Activated T-helper 1 cell treated with anti-CD3 and anti-CD28 coated beads, Interleukin-12 subunit alpha, Interleukin-12 subunit beta, Interleukin-2, Interleukin-4 antibody, amounts not matched to agents 30 ng/mL and 10 ng/mL and 1 ng/mL, durations not matched to agents 14 hours and 24 hours and 36 hours (primary cell): ENCODE measurements at regions of chr18 and their contacts with region 1.

Region 1: DNA sequence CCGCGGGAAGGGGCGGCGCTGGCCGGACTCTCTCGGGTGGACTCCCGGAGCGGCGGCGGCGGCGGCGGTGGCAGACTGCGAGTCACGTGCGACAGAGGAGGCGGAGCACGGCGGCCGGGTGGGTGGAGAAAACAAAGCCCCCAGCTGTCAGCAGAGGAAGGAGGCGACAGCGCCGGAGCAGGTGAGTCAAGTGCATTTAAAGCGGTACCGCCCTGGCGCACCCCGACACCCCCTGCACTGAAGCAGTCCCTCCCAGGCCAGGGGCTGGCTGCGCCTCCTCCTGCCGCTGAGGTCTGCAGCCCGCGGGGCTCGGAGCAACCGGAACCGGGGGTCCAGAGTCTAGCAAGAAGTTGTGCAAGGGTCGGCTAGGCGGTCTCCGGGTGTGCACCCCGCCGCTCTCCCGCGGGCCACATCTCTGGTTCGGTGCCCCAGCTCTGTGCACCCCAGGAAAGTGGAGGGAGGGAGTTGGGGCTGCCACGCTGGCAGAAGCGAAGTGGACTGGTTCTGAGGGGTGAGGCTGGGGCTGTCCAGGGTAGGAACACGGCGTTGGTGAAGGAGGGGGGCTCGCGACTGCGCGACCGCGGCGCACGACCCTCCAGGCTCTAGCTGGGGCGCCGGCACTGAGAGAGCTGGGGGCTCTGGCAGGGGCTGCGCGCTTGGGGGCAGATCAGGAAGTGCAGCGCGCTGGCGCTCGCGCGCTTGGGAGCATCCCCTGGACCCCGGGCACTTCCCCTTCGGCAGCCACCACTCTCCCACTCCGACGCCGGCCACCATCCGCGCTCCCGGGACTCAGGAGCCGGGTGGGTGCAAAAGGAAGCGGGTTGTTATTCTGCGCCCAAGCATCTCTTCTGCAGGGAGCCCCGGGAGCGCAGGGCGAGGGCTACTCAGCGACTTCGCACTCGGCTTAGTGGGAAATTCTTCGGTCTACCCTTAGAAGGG is 64.0 kb upstream of the MAPRE2 start:
- DNase-seq: peak; percentile 55
- H3K4me3 Mint-ChIP-seq: peak overlapping the region; percentile 78
- H3K27ac Mint-ChIP-seq: no peak overlapping the region
- H3K4me1 Mint-ChIP-seq: peaks cover 25% of the 10 kb centered on the region
- H3K27me3 Mint-ChIP-seq: peaks cover 31% of the 10 kb centered on the region

Region 2: DNA sequence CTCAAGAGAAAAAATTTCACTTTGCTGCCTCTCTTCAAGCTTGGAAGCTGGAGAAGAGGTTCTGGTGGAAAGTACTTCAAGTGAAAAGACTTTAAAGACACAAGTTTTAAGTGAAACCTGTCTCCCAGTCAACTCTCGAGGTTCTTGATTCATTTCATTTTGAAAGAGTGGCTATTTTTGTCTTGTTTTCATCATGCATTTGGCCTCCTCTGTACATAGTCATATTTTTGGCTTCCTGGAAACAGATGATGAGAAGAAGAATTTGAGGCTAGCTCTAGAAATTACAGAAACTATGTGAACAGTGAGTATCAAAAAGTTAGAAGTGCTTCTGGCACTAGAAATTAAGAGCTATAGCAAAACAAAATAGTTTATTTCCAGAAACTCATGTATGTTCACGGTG is 142.3 kb before region 1 on chr18:
- intact Hi-C with region 1: loop called (anchors 1 kb)
- DNase-seq: no peak
- H3K4me3 Mint-ChIP-seq: no peak overlapping the region
- H3K27ac Mint-ChIP-seq: peak overlapping the region; percentile 4
- H3K4me1 Mint-ChIP-seq: peaks cover 14% of the 10 kb centered on the region
- H3K27me3 Mint-ChIP-seq: no peaks in the 10 kb centered on the region

Region 3: DNA sequence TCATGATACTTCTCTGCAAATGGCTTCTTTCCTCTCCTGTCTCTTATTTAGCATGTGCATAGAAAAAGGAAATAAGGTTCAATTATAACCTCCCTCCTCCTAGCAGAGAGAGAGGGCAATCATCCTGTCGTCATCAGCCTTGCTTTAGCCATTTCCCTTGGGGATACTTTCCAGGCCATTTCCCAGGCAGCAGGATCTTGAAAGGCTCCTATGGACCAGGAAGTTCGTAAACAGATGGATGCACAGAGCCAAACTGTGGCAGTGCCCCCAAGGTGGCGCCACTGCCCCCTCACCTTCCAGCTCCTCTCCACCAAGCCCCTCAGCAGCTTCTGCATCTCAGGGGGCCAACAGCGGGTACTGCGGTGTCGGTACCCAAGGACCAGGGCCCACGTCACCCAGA is 109.6 kb before region 1 on chr18:
- intact Hi-C with region 1: loop called (anchors 1 kb)
- DNase-seq: no peak
- H3K4me3 Mint-ChIP-seq: no peak overlapping the region
- H3K27ac Mint-ChIP-seq: no peak overlapping the region
- H3K4me1 Mint-ChIP-seq: peaks cover 33% of the 10 kb centered on the region
- H3K27me3 Mint-ChIP-seq: peaks cover 20% of the 10 kb centered on the region

Region 4: DNA sequence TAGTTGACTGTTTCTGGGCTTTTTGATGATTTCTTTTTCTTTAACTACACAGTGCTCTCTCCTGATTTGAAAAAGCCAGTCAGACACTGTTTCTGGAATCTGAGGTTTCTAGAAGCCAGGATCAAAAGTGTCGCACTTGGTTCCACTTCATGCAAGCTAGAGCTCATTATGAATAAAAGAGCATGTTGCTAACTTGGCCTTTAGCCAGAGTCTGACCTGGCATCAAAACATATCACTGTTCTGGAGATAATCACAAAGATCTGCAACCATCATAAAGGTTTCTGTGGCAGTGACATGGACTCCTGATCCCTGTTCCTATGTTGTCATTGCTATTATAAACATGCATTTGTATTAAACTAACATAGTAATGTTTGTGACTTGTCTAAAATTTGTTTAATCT is 12.1 kb before region 1 on chr18:
- intact Hi-C with region 1: no loop called
- DNase-seq: no peak
- H3K4me3 Mint-ChIP-seq: no peak overlapping the region
- H3K27ac Mint-ChIP-seq: no peak overlapping the region
- H3K4me1 Mint-ChIP-seq: no peaks in the 10 kb centered on the region
- H3K27me3 Mint-ChIP-seq: peaks cover 1% of the 10 kb centered on the region

Region 5: GRCh38 chr18:35029770-35030169 is 52.6 kb after region 1 on chr18:
- intact Hi-C with region 1: loop called (anchors 5 kb)
- DNase-seq: no peak
- H3K4me3 Mint-ChIP-seq: peak overlapping the region; percentile 77
- H3K27ac Mint-ChIP-seq: peak overlapping the region; percentile 95
- H3K4me1 Mint-ChIP-seq: peaks cover 42% of the 10 kb centered on the region
- H3K27me3 Mint-ChIP-seq: no peaks in the 10 kb centered on the region

Region 6: GRCh38 chr18:35050028-35050546 is 72.9 kb after region 1 on chr18:
- intact Hi-C with region 1: loop called (anchors 2 kb)
- DNase-seq: no peak
- H3K4me3 Mint-ChIP-seq: peak overlapping the region; percentile 65
- H3K27ac Mint-ChIP-seq: peak overlapping the region; percentile 81
- H3K4me1 Mint-ChIP-seq: peaks cover 69% of the 10 kb centered on the region
- H3K27me3 Mint-ChIP-seq: no peaks in the 10 kb centered on the region

Region 7: GRCh38 chr18:35343936-35344735 is 367.0 kb after region 1 on chr18 and contains the start of gene ZNF24:
- intact Hi-C with region 1: loop called (anchors 2 kb)
- DNase-seq: peak; percentile 90
- H3K4me3 Mint-ChIP-seq: peak within 1 kb of the TSS; percentile 99
- H3K27ac Mint-ChIP-seq: peak within 1 kb of the TSS; percentile 98
- H3K4me1 Mint-ChIP-seq: peaks cover 38% of the 10 kb centered on the region
- H3K27me3 Mint-ChIP-seq: no peaks in the 10 kb centered on the region
- total RNA-seq, gene ZNF24: 56.4 and 56.6 TPM in 2 replicates

Region 8: DNA sequence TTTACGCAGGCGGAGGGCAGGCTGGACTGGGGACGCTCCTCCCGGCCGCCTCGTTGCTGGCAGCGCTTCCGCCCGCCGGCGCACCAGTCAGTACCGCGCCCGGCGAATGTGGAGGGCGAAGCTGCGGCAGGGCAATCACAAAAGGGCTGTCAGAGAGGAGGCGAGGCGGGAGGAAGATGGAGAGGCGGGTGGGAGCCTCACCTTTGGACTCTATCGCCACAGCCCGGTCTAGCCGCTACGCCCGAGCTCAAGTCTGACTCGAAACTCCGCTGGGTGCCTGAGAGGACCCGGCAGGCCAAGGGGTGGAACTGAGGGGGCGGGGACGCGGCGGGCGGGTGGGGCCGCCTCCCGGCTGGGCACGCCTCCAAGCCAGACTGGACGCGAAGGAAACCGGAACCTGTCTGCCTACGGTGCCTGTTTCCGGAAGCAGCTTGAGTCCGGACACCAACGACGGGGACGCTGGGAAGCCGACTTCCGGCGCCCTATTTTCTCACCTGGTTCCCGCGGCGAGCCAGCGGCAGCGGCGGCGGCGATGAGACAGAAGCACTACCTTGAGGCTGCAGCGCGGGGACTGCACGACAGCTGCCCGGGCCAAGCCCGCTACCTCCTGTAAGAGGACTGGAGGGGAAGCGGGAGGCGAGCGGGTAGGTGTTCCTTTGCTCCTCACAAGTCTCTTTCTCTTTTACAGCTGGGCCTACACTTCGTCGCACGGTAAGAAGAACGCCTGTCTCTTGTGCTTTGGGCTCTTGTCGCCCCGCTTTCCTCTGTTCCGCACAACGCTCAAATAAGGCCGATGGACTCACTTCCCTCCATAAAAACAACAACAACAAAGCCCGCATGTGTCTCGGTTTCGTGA is 995.3 kb after region 1 on chr18 and contains the start of gene RMP24:
- intact Hi-C with region 1: loop called (anchors 10 kb)
- DNase-seq: peak; percentile 90
- H3K4me3 Mint-ChIP-seq: peak within 1 kb of the TSS; percentile 98
- H3K27ac Mint-ChIP-seq: peak within 1 kb of the TSS; percentile 98
- H3K4me1 Mint-ChIP-seq: peaks cover 53% of the 10 kb centered on the region
- H3K27me3 Mint-ChIP-seq: no peaks in the 10 kb centered on the region